Panc1 (cell line): ENCODE measurements at regions of chr11 and their contacts with region 1.

Region 1: GRCh38 chr11:17164361-17165246 is 43.2 kb downstream of the PIK3C2A start:
- DNase-seq: no peak
- ATAC-seq: no peak
- H3K4me3 ChIP-seq: no peak overlapping the region
- H3K27ac ChIP-seq: no peak overlapping the region
- H3K4me1 ChIP-seq: no peaks in the 10 kb centered on the region
- H3K27me3 ChIP-seq: no peaks in the 10 kb centered on the region
- CTCF ChIP-seq: no peak

Region 2: GRCh38 chr11:16997624-16998023 is 167.0 kb before region 1 on chr11:
- CTCF ChIA-PET with region 1: no interaction called
- POLR2A ChIA-PET with region 1: no interaction called
- in situ Hi-C with region 1: no loop called
- intact Hi-C with region 1: no loop called
- DNase-seq: no peak
- ATAC-seq: no peak
- H3K4me3 ChIP-seq: no peak overlapping the region
- H3K27ac ChIP-seq: no peak overlapping the region
- H3K4me1 ChIP-seq: no peaks in the 10 kb centered on the region
- H3K27me3 ChIP-seq: no peaks in the 10 kb centered on the region
- CTCF ChIP-seq: no peak

Region 3: GRCh38 chr11:17197431-17197898 is 32.9 kb after region 1 on chr11:
- CTCF ChIA-PET with region 1: no interaction called
- POLR2A ChIA-PET with region 1: interaction called, 12 read pairs
- in situ Hi-C with region 1: no loop called
- intact Hi-C with region 1: no loop called
- DNase-seq: no peak
- ATAC-seq: peak; percentile 48
- H3K4me3 ChIP-seq: no peak overlapping the region
- H3K27ac ChIP-seq: no peak overlapping the region
- H3K4me1 ChIP-seq: no peaks in the 10 kb centered on the region
- H3K27me3 ChIP-seq: no peaks in the 10 kb centered on the region
- CTCF ChIP-seq: no peak